CD14-positive monocyte (primary cell): ENCODE measurements at regions of chr7 and their contacts with region 1.

Region 1: GRCh38 chr7:88243345-88243909 is 23.6 kb upstream of the SRI start:
- DNase-seq: peak in 2 of 3 donors; percentile 54 to 64
- H3K4me3 ChIP-seq: no peak overlapping the region
- H3K4me3 Mint-ChIP-seq: no peak overlapping the region
- H3K27ac ChIP-seq: no peak overlapping the region
- H3K27ac Mint-ChIP-seq: peak overlapping the region in 4 of 7 donors; percentile 29 to 78 (median 63)
- H3K4me1 ChIP-seq: peaks cover 4 to 6% of the 10 kb centered on the region in 2 donors
- H3K4me1 Mint-ChIP-seq: peaks cover 6% of the 10 kb centered on the region
- H3K27me3 ChIP-seq: no peaks in the 10 kb centered on the region
- H3K27me3 Mint-ChIP-seq: peaks cover 0 to 4% (median 2%) of the 10 kb centered on the region in 3 donors
- CTCF ChIP-seq: peak; percentile 86

Region 2: DNA sequence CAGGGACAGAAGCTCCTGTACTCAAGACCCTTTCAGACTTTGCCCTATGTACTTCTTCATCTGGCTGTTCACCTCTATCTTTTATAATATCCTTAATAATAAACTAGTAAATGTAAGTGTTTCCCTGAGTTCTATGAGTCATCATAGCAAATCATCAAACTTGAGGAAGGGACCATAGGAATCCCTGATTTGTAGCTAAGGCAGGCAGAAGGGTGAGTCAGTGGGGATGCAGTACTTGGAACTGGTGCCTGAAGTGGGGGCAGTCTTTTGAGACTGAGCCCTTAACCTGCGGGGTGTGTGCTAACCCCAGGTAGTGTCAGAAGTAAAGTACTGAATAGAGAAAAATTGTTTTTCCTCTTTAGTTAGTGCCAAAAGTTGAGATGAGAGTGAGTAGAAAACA is 1017.7 kb before region 1 on chr7:
- intact Hi-C with region 1: no loop called
- DNase-seq: peak in 1 of 3 donors; percentile 17
- H3K4me3 ChIP-seq: no peak overlapping the region
- H3K4me3 Mint-ChIP-seq: no peak overlapping the region
- H3K27ac ChIP-seq: no peak overlapping the region
- H3K27ac Mint-ChIP-seq: no peak overlapping the region
- H3K4me1 ChIP-seq: peaks cover 3 to 4% of the 10 kb centered on the region in 2 donors
- H3K4me1 Mint-ChIP-seq: peaks cover 7% of the 10 kb centered on the region
- H3K27me3 ChIP-seq: peaks cover 20 to 27% of the 10 kb centered on the region in 2 donors
- H3K27me3 Mint-ChIP-seq: peaks cover 0 to 16% (median 13%) of the 10 kb centered on the region in 3 donors
- CTCF ChIP-seq: no peak

Region 3: DNA sequence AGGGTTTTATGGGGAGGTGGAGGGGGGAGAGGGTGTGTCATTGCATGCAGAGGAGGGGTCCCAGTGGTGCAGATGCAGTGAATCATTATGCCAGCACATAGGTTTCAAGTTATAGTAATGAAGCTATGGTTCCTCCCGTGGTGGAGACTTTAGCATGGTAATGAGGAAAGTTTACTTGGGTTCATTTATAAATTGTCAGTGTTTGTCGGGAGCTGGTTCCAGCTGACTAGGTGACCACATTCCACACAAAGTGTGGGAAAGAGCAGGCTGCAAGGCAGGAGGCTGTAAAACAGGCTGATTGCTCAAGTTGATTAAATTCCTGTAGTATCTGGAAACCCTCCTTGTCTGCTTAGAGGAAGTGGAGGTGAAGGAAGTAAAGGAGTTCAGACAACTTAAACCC is 102.5 kb before region 1 on chr7:
- intact Hi-C with region 1: no loop called
- DNase-seq: no peak
- H3K4me3 ChIP-seq: no peak overlapping the region
- H3K4me3 Mint-ChIP-seq: no peak overlapping the region
- H3K27ac ChIP-seq: no peak overlapping the region
- H3K27ac Mint-ChIP-seq: no peak overlapping the region
- H3K4me1 ChIP-seq: no peaks in the 10 kb centered on the region
- H3K4me1 Mint-ChIP-seq: no peaks in the 10 kb centered on the region
- H3K27me3 ChIP-seq: no peaks in the 10 kb centered on the region
- H3K27me3 Mint-ChIP-seq: no peaks in the 10 kb centered on the region
- CTCF ChIP-seq: no peak

Region 4: DNA sequence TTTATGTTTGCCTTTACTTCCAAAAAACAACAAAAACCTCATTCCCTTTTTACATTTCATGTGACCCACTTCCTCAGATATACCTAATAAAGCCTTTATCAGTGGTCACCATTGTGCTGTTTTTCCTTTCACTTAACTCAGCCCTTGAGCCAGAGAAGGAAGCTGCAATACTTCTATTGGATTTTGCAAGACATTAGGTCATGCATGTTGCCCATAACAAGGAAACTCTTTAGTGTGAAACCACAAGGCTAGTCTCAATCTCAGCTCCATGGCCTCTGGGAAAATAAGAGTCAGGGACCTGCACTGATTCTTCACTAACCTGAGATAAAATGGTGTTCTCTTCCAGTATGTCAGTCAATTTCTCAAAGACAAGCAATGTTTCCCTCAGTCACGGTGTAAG is 35.5 kb after region 1 on chr7:
- intact Hi-C with region 1: loop called in 1 of 2 experiments (anchors 2 kb)
- DNase-seq: peak; percentile 79 to 92 (median 90)
- H3K4me3 ChIP-seq: peak overlapping the region in 1 of 3 experiments; percentile 21
- H3K4me3 Mint-ChIP-seq: no peak overlapping the region
- H3K27ac ChIP-seq: peak overlapping the region; percentile 9 to 70
- H3K27ac Mint-ChIP-seq: peak overlapping the region; percentile 79 to 95 (median 91)
- H3K4me1 ChIP-seq: peaks cover 27 to 53% of the 10 kb centered on the region in 2 donors
- H3K4me1 Mint-ChIP-seq: peaks cover 47% of the 10 kb centered on the region
- H3K27me3 ChIP-seq: no peaks in the 10 kb centered on the region
- H3K27me3 Mint-ChIP-seq: peaks cover 1 to 2% (median 2%) of the 10 kb centered on the region in 3 donors
- CTCF ChIP-seq: no peak

Region 5: DNA sequence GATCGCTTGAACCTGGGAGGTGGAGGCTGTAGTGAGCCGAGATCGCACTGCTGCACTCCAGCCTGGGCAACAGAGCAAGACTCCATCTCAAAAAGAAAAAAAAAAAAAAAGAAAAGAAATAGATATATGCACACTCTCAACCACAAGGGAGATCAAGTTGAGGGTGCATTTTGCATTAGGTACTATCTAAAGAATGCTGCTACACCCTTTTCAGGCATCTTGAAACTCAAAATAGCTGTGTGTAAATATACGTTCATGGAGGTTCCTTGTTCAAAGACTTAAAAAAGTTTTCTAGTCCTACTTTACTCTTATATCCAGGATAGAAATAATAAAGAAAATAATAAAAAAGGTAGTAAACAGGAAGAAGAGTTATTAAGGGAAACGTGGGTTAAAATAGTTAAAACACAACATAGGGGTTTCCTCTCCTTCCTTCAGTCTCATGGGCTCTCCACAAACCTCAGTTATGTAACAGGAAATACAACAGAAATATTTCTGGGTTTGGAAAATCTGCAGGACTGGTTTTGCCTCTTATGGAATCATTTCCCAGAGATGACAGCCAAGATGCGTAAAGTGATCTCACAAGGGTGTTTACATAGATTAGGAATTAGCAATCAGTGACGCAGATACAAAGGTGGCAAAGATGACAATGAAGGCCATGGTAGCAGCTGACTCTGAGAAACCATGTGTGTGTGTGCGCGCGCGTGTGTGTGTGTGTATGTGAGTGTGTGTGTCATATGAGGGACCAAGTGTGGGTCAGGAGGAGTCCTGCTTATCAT is 48.2 kb after region 1 on chr7:
- intact Hi-C with region 1: no loop called
- DNase-seq: no peak
- H3K4me3 ChIP-seq: no peak overlapping the region
- H3K4me3 Mint-ChIP-seq: no peak overlapping the region
- H3K27ac ChIP-seq: peak overlapping the region in 1 of 2 donors; percentile 28
- H3K27ac Mint-ChIP-seq: no peak overlapping the region
- H3K4me1 ChIP-seq: peaks cover 8 to 14% of the 10 kb centered on the region in 2 donors
- H3K4me1 Mint-ChIP-seq: peaks cover 31% of the 10 kb centered on the region
- H3K27me3 ChIP-seq: no peaks in the 10 kb centered on the region
- H3K27me3 Mint-ChIP-seq: peaks cover 0 to 2% (median 0%) of the 10 kb centered on the region in 3 donors
- CTCF ChIP-seq: no peak

Region 6: GRCh38 chr7:88344956-88345832 is 101.8 kb after region 1 on chr7:
- intact Hi-C with region 1: loop called in 1 of 2 experiments (anchors 5 kb)
- DNase-seq: peak; percentile 27 to 52 (median 38)
- H3K4me3 ChIP-seq: no peak overlapping the region
- H3K4me3 Mint-ChIP-seq: peak overlapping the region in 1 of 2 donors; percentile 53
- H3K27ac ChIP-seq: no peak overlapping the region
- H3K27ac Mint-ChIP-seq: no peak overlapping the region
- H3K4me1 ChIP-seq: peaks cover 6 to 14% of the 10 kb centered on the region in 2 donors
- H3K4me1 Mint-ChIP-seq: peaks cover 27% of the 10 kb centered on the region
- H3K27me3 ChIP-seq: no peaks in the 10 kb centered on the region
- H3K27me3 Mint-ChIP-seq: no peaks in the 10 kb centered on the region
- CTCF ChIP-seq: peak; percentile 56

Region 7: DNA sequence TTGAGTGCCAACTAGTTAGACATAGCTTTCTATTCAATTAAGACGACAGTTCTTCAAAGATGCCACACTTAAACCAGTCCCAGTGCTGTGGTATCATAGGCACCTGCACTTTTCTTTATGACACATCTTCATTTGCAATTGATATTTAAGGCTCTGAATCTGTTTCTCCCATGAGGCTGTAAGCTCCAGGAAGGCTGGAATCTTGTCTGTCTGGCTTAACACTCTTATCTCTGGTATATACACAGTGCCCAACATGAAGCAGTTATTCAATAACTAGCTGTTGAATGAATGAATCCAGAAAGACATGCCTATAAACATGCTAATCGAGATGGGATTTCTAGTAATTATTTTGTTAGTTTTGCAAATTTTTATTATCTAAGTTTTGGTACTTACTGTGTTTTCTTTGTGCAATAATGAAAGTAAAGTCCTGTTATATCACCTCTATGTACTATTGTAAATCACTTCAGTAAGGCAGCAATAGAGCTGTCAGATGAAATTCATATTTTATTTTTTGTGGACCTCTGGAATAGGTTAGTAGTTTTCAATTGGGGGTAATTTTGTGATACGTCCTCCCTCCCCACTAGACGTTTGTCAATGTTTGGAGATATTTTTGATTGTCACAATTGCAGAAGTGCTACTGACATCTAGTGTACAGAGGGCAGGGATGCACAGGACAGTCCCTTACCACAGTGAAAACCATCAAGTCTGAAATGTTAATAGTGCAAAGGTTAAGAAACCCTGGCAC is 114.5 kb after region 1 on chr7:
- intact Hi-C with region 1: loop called in 1 of 2 experiments (anchors 5 kb)
- DNase-seq: peak; percentile 24 to 59 (median 48)
- H3K4me3 ChIP-seq: peak overlapping the region in 1 of 3 experiments; percentile 47
- H3K4me3 Mint-ChIP-seq: peak overlapping the region in 1 of 2 donors; percentile 82
- H3K27ac ChIP-seq: peak overlapping the region in 1 of 2 donors; percentile 2
- H3K27ac Mint-ChIP-seq: peak overlapping the region in 2 of 7 donors; percentile 77
- H3K4me1 ChIP-seq: peaks cover 46 to 59% of the 10 kb centered on the region in 2 donors
- H3K4me1 Mint-ChIP-seq: peaks cover 45% of the 10 kb centered on the region
- H3K27me3 ChIP-seq: no peaks in the 10 kb centered on the region
- H3K27me3 Mint-ChIP-seq: peaks cover 0 to 5% (median 0%) of the 10 kb centered on the region in 3 donors
- CTCF ChIP-seq: peak; percentile 70

Region 8: DNA sequence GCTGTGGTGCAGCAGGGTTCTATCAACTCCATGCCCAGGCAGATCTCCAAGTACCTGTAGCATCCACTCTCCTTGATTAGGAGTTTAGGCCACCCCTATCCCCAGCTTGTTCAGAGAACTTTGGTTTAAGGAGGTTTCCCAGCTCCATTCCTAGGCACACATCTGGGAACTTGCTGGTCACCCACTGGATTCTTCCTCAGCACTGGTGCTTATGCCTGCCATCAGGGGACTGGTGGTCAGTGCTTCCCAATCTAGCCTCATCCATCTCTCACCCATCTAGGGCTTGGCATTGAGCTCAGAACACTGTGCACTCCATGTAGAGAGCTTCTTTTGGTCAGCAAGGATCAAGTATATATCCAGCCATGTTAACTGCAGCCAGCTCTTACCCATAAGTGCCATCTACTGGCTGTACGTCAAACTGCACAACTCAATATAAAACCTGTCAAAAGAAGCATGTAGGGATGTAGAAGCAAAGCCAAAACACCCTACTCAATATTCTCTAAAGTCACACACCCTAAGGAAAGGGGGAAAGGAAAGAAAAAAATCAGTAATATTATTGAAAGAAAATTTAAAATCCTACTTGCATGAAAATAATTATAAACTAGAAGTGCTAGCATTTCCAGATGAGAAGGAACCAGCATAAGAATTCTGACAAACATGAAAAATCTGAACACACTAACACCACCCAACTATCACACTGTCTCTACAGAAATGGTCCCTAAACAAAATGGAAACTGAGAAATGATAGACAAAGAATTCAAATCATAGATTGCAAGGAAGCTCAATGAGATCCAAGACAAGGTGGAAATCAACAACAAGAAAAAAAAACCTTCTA is 1379.6 kb after region 1 on chr7:
- intact Hi-C with region 1: loop called in 1 of 2 experiments (anchors 10 kb)
- DNase-seq: no peak
- H3K4me3 ChIP-seq: no peak overlapping the region
- H3K4me3 Mint-ChIP-seq: no peak overlapping the region
- H3K27ac ChIP-seq: no peak overlapping the region
- H3K27ac Mint-ChIP-seq: peak overlapping the region in 1 of 7 donors; percentile 25
- H3K4me1 ChIP-seq: no peaks in the 10 kb centered on the region
- H3K4me1 Mint-ChIP-seq: no peaks in the 10 kb centered on the region
- H3K27me3 ChIP-seq: no peaks in the 10 kb centered on the region
- H3K27me3 Mint-ChIP-seq: peaks cover 0 to 4% (median 1%) of the 10 kb centered on the region in 3 donors
- CTCF ChIP-seq: peak; percentile 39